ENCODE measurements at regions of chr6 and their contacts with region 1.

Region 1: DNA sequence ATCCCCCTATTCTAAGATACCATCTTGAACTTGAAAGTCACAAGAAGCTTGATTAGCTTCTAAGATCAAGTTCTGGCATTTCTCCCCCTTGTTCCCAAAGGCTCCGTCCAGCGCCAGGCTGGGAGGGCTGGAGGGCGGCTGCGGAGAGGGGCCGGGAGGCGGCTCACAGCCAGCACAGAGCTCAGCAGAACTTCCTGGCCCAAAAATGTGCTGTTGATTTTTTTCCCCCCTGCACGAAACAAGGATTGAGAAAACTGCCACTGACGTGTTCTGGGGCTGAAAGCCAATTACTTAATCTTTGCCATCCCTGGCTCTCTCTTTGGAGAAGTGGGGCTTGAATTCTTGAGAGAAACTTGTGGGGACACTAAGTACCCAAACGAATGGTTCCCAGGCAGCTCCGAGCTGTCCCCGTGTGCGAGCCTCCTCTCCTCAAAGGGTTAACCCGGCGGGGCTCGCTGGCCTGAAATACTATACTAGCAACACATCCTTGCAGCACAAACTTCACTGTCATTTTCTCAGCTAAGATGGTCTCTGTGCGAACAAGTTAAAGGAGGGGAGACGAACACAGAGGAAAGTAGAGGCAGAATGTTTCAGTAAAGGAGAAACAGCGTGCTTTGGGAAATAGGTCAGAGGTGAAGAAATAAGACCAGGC is 452 bp downstream of the TRAF3IP2 start:
- DNase-seq: peak; percentile 38
- H3K4me3 Mint-ChIP-seq: peak overlapping the region; percentile 82
- H3K27ac Mint-ChIP-seq: peak overlapping the region; percentile 93
- H3K4me1 Mint-ChIP-seq: peaks cover 39% of the 10 kb centered on the region
- H3K27me3 Mint-ChIP-seq: no peaks in the 10 kb centered on the region

Region 2: DNA sequence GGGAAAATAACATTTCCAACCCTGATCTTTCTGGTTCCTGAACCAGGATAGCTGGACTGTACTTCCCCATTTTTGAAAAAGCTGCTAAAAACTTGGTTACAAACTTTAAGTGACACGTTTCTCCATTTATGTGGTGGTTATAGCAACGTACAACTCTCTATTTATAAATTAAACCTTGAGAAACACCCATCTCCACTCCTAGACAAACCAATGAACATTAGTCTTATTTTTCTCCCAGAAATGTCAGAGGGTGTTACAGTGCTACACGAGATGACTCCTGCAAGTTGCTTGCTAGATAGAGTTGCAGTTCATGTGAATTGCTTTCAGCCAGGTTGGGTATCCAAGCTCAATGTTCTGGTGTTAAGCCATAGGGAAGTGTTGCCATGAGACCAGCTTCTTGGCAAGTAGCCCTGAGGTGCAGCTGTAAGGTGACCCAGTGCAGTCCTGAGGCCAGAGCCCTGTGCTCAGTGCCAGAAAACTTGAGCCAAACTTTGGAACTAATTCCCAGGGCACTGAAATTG is 70.9 kb before region 1 on chr6:
- CTCF ChIA-PET with region 1: no interaction called
- intact Hi-C with region 1: loop called (anchors 1 kb)
- DNase-seq: no peak
- H3K4me3 Mint-ChIP-seq: no peak overlapping the region
- H3K27ac Mint-ChIP-seq: no peak overlapping the region
- H3K4me1 Mint-ChIP-seq: peaks cover 30% of the 10 kb centered on the region
- H3K27me3 Mint-ChIP-seq: no peaks in the 10 kb centered on the region

Region 3: GRCh38 chr6:111588366-111588765 is 16.9 kb before region 1 on chr6:
- CTCF ChIA-PET with region 1: no interaction called
- intact Hi-C with region 1: loop called (anchors 1 kb)
- DNase-seq: no peak
- H3K4me3 Mint-ChIP-seq: no peak overlapping the region
- H3K27ac Mint-ChIP-seq: no peak overlapping the region
- H3K4me1 Mint-ChIP-seq: peaks cover 21% of the 10 kb centered on the region
- H3K27me3 Mint-ChIP-seq: no peaks in the 10 kb centered on the region

Region 4: GRCh38 chr6:111997078-111997852 is 392.0 kb after region 1 on chr6:
- CTCF ChIA-PET with region 1: no interaction called
- intact Hi-C with region 1: loop called (anchors 1 kb)
- DNase-seq: peak; percentile 89
- H3K4me3 Mint-ChIP-seq: peak overlapping the region; percentile 53
- H3K27ac Mint-ChIP-seq: peak overlapping the region; percentile 65
- H3K4me1 Mint-ChIP-seq: peaks cover 47% of the 10 kb centered on the region
- H3K27me3 Mint-ChIP-seq: no peaks in the 10 kb centered on the region

Measured in activated naive CD4-positive, alpha-beta T cell treated with anti-CD3 and anti-CD28 coated beads for 36 hours (primary cell).